ENCODE measurements at regions of chr6 and their contacts with region 1.

Region 1: GRCh38 chr6:25717866-25718740 is 36.4 kb upstream of the SLC17A4 start:
- DNase-seq: no peak
- H3K4me3 Mint-ChIP-seq: no peak overlapping the region
- H3K27ac Mint-ChIP-seq: no peak overlapping the region
- H3K4me1 Mint-ChIP-seq: no peaks in the 10 kb centered on the region
- H3K27me3 Mint-ChIP-seq: peaks cover 7% of the 10 kb centered on the region

Region 2: DNA sequence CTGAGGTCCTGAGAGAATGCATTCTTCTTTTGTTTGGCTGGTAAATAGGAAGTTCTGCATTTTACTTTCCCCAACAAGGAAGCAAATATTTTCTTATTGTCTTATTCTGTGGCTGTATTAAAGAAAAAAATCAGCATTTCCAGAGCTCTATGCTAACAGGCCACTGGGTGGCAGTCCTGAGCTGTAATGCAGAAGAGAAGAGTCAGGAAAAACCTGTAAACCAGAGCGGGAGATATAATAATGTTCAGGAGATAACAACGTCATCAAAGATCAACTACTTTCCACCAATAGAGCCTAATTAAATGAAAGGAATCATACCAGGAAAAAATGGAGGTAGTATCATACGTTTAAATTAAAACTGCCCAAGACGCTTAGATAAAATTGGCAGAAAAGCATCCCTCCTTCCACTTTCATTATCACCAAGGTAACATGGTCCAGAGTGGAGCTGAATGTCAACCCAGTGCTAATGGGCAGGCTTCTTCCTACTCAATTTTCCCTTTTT is 494.6 kb before region 1 on chr6:
- intact Hi-C with region 1: loop called (anchors 2 kb)
- DNase-seq: peak; percentile 24
- H3K4me3 Mint-ChIP-seq: peak overlapping the region; percentile 79
- H3K27ac Mint-ChIP-seq: no peak overlapping the region
- H3K4me1 Mint-ChIP-seq: peaks cover 14% of the 10 kb centered on the region
- H3K27me3 Mint-ChIP-seq: no peaks in the 10 kb centered on the region

Region 3: GRCh38 chr6:25882051-25882496 is 164.0 kb after region 1 on chr6:
- intact Hi-C with region 1: loop called (anchors 2 kb)
- DNase-seq: peak; percentile 24
- H3K4me3 Mint-ChIP-seq: peak overlapping the region; percentile 86
- H3K27ac Mint-ChIP-seq: peak overlapping the region; percentile 72
- H3K4me1 Mint-ChIP-seq: peaks cover 15% of the 10 kb centered on the region
- H3K27me3 Mint-ChIP-seq: peaks cover 6% of the 10 kb centered on the region

Region 4: GRCh38 chr6:25889877-25890853 is 172.1 kb after region 1 on chr6:
- intact Hi-C with region 1: loop called (anchors 2 kb)
- DNase-seq: no peak
- H3K4me3 Mint-ChIP-seq: no peak overlapping the region
- H3K27ac Mint-ChIP-seq: no peak overlapping the region
- H3K4me1 Mint-ChIP-seq: peaks cover 10% of the 10 kb centered on the region
- H3K27me3 Mint-ChIP-seq: peaks cover 7% of the 10 kb centered on the region

Region 5: GRCh38 chr6:26003102-26003694 is 285.1 kb after region 1 on chr6:
- intact Hi-C with region 1: loop called (anchors 1 kb)
- DNase-seq: no peak
- H3K4me3 Mint-ChIP-seq: no peak overlapping the region
- H3K27ac Mint-ChIP-seq: no peak overlapping the region
- H3K4me1 Mint-ChIP-seq: peaks cover 13% of the 10 kb centered on the region
- H3K27me3 Mint-ChIP-seq: no peaks in the 10 kb centered on the region

Measured in activated T-helper 1 cell treated with anti-CD3 and anti-CD28 coated beads, Interleukin-12 subunit alpha, Interleukin-12 subunit beta, Interleukin-2, Interleukin-4 antibody, amounts not matched to agents 30 ng/mL and 10 ng/mL and 1 ng/mL, durations not matched to agents 14 hours and 24 hours and 36 hours (primary cell).